MCF 10A (cell line): ENCODE measurements at regions of chr22 and their contacts with region 1.

Region 1: GRCh38 chr22:22060200-22061084 is 77.9 kb upstream of the TOP3B start:
- DNase-seq: peak; percentile 61
- H3K4me3 Mint-ChIP-seq: no peak overlapping the region
- H3K27ac Mint-ChIP-seq: no peak overlapping the region
- H3K4me1 Mint-ChIP-seq: peaks cover 9% of the 10 kb centered on the region
- H3K27me3 Mint-ChIP-seq: peaks cover 26% of the 10 kb centered on the region
- CTCF ChIP-seq: peak; percentile 89

Region 2: DNA sequence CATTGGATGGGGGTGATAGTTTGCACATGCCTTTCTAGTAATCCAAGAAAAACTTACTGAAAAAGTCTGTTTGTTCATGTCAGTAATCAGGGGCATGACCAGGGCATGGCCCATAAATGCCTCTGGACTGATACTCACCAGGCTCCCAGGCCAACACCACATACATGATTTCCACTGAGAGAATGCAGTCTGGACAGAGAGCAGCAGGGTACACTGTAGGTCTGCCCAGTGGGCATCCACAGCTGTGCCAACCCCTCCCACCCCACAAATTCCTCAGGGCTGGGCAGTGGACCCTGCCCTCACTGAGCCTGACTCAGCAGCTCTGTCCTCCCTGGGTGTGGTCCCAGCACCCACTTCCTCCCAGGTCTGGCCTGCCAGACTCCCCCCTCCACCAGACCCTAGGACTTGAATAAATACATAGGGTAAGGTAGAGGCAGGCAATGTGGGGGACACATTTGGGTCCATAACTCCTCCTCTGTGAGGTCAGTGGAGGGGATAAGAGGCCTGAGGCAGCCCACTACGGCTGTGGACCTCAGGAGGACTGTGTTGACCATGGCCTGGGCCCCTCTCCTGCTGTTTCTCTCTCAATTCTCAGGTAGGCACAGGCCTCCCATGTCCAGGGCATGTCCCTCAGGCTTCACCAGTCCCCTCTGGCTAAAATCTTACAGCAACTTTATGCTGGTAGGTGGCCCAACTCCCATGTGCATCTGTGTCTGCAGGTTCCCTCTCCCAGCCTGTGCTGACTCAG is 14.4 kb after region 1 on chr22:
- CTCF ChIA-PET with region 1: interaction called, 9 read pairs
- POLR2A ChIA-PET with region 1: interaction called, 13 read pairs
- intact Hi-C with region 1: no loop called
- DNase-seq: no peak
- H3K4me3 Mint-ChIP-seq: peak overlapping the region; percentile 20
- H3K27ac Mint-ChIP-seq: peak overlapping the region; percentile 78
- H3K4me1 Mint-ChIP-seq: peaks cover 48% of the 10 kb centered on the region
- H3K27me3 Mint-ChIP-seq: no peaks in the 10 kb centered on the region
- CTCF ChIP-seq: no peak

Region 3: GRCh38 chr22:22144858-22145257 is 84.4 kb after region 1 on chr22:
- CTCF ChIA-PET with region 1: interaction called, 3 read pairs
- POLR2A ChIA-PET with region 1: no interaction called
- intact Hi-C with region 1: loop called (anchors 5 kb)
- DNase-seq: no peak
- H3K4me3 Mint-ChIP-seq: no peak overlapping the region
- H3K27ac Mint-ChIP-seq: no peak overlapping the region
- H3K4me1 Mint-ChIP-seq: no peaks in the 10 kb centered on the region
- H3K27me3 Mint-ChIP-seq: peaks cover 58% of the 10 kb centered on the region
- CTCF ChIP-seq: no peak